ENCODE measurements at regions of chr13 and their contacts with region 1.

Region 1: GRCh38 chr13:112510002-112510780 is 77.8 kb downstream of the TUBGCP3 start:
- DNase-seq: peak; percentile 53
- H3K4me3 Mint-ChIP-seq: no peak overlapping the region
- H3K27ac Mint-ChIP-seq: peak overlapping the region; percentile 25
- H3K4me1 Mint-ChIP-seq: no peaks in the 10 kb centered on the region
- H3K27me3 Mint-ChIP-seq: no peaks in the 10 kb centered on the region
- CTCF ChIP-seq: peak; percentile 52

Region 2: DNA sequence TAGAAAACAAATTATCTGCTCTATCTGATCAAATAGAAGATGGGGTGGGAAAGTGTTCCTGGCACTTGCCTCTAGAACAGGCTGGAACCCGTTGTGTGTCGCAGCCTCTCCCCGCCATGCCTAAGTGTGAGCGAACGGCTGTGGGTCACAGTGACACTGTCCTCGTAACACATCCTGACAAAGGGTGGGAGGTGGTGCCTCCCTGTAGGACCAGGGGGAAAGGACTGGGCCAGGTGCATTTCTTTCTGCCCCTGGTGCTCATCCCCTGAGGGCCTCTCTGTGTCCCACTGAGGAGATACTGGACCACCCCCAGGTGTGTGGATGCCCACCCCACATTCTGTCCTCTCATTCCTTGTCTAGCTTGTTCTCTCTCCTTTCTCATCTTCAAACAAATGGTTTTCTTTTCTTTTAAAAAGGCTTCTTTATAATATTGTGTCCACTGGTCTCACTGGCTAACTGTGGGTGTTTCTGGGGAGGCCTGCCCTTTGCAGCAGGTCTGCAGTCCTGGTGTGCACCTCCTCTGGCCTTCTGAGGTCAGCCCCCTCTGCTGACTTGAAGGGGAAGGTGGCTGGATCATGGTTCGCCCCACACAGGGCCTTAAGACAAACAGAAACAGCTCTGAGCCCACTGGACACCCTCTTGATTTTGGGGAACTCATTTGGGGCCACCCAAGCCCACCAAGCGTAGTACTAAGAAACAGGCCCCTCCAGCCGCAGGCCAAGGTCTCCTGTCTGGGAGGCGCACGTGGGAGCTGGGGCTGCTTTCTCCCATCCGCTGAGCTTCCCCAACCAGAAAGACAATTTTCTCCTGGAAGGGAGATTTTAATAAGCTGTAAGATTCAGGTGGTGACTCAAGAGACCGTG is 595.7 kb before region 1 on chr13:
- CTCF ChIA-PET with region 1: no interaction called
- POLR2A ChIA-PET with region 1: no interaction called
- intact Hi-C with region 1: no loop called
- DNase-seq: no peak
- H3K4me3 Mint-ChIP-seq: no peak overlapping the region
- H3K27ac Mint-ChIP-seq: no peak overlapping the region
- H3K4me1 Mint-ChIP-seq: no peaks in the 10 kb centered on the region
- H3K27me3 Mint-ChIP-seq: no peaks in the 10 kb centered on the region
- CTCF ChIP-seq: no peak

Region 3: GRCh38 chr13:112606109-112607001 is 96.2 kb after region 1 on chr13:
- CTCF ChIA-PET with region 1: no interaction called
- POLR2A ChIA-PET with region 1: no interaction called
- intact Hi-C with region 1: loop called (anchors 5 kb)
- DNase-seq: peak; percentile 83
- H3K4me3 Mint-ChIP-seq: peak overlapping the region; percentile 74
- H3K27ac Mint-ChIP-seq: no peak overlapping the region
- H3K4me1 Mint-ChIP-seq: peaks cover 4% of the 10 kb centered on the region
- H3K27me3 Mint-ChIP-seq: peaks cover 65% of the 10 kb centered on the region
- CTCF ChIP-seq: peak; percentile 78

Region 4: GRCh38 chr13:112674412-112675365 is 164.5 kb after region 1 on chr13:
- CTCF ChIA-PET with region 1: no interaction called
- POLR2A ChIA-PET with region 1: no interaction called
- intact Hi-C with region 1: no loop called
- DNase-seq: no peak
- H3K4me3 Mint-ChIP-seq: no peak overlapping the region
- H3K27ac Mint-ChIP-seq: no peak overlapping the region
- H3K4me1 Mint-ChIP-seq: no peaks in the 10 kb centered on the region
- H3K27me3 Mint-ChIP-seq: peaks cover 36% of the 10 kb centered on the region
- CTCF ChIP-seq: no peak